Psoas muscle (tissue), 8 donors: ENCODE measurements at regions of chr17 and their contacts with region 1.

Region 1: GRCh38 chr17:81484195-81484979 is 28.2 kb downstream of the ACTG1 start:
- DNase-seq: peak; percentile 90 to 95
- ATAC-seq: peak; percentile 71 to 80 (median 74)
- H3K4me3 ChIP-seq: peak overlapping the region; percentile 64
- H3K27ac ChIP-seq: peak overlapping the region; percentile 81
- H3K4me1 ChIP-seq: peaks cover 31% of the 10 kb centered on the region
- H3K27me3 ChIP-seq: no peaks in the 10 kb centered on the region
- CTCF ChIP-seq: peak; percentile 100

Region 2: DNA sequence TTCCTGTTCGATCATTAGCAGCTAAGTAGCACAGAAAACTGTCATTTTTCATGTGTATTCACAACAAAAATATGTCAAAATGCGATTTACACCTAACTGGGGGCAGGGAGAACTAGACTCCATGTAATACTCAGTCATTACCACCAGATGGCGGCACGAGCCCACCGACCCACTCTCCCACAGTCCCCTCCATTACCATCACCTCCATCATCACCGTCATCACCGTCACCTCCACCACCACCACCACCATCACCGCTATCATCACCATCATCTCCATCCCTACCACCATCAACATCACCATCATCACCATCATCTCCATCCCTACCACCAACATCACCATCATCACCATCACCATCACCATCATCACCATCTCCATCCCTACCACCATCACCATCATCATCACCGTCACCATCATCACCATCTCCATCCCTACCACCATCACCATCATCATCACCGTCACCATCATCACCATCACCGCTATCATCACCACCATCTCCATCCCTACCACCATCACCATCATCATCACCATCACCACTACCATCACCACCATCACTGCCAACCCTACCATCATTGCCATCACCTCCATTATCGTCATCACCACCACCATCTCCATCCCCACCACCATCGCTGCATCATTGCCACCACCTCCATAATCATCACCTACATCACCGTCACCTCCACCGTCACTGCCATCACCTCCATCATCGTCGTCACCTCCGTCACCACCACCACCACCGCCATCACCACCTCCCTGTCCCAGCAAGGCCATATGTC is 230.8 kb before region 1 on chr17:
- intact Hi-C with region 1: loop called (anchors 1 to 5 kb)
- DNase-seq: peak in 1 of 2 donors; percentile 48
- ATAC-seq: peak; percentile 53 to 65 (median 54)
- H3K4me3 ChIP-seq: no peak overlapping the region
- H3K27ac ChIP-seq: no peak overlapping the region
- H3K4me1 ChIP-seq: peaks cover 18% of the 10 kb centered on the region
- H3K27me3 ChIP-seq: no peaks in the 10 kb centered on the region
- CTCF ChIP-seq: peak; percentile 83

Region 3: DNA sequence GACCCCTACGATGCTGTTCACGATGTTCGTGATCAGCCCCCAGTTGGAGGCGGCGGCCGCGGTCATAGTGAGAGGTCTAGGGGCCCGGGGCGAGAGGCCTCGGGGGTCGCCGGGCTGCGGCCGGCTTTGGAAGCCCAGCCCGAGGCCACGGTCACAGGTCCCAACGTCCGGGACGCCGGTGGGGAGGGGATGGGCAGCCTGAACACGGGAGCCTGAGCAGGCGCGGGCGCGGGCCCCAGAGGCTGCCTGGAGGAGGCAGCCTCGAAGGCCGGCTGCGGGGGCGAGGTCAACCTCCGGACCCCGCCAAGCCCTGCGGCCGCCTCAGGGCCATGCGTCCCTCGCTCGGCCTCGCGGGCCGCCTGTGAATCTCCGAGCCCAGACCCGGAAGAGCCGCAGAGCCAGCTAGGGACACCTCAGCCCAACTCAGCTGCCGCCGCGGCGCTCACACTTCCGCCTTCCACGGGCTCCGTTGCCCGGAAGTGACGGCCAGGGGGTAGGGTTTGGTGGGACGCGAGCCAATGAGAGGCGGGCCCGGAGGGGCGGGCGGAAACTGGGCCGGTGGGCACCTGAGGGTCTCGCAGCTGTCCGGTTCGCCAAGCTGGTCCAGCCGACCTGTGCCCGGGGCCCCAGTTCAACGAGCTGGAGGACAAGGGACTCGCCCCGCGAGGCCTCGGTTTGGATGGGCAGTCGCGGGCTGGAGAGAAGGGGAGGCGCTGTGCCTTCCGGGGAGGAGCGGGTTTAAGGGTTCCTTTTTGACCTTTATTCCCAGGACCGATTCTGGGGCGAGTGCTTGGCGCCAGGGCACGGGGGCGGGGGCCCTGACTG is 189.3 kb before region 1 on chr17 and contains the start of gene SLC38A10:
- intact Hi-C with region 1: loop called (anchors 1 to 5 kb)
- DNase-seq: peak; percentile 92 to 96
- ATAC-seq: peak; percentile 90 to 94 (median 92)
- H3K4me3 ChIP-seq: peak within 1 kb of the TSS; percentile 75
- H3K27ac ChIP-seq: peak within 1 kb of the TSS; percentile 96
- H3K4me1 ChIP-seq: peaks cover 37% of the 10 kb centered on the region
- H3K27me3 ChIP-seq: no peaks in the 10 kb centered on the region
- CTCF ChIP-seq: no peak
- total RNA-seq, gene SLC38A10: 16.7 to 23.9 (median 18.6) TPM

Region 4: DNA sequence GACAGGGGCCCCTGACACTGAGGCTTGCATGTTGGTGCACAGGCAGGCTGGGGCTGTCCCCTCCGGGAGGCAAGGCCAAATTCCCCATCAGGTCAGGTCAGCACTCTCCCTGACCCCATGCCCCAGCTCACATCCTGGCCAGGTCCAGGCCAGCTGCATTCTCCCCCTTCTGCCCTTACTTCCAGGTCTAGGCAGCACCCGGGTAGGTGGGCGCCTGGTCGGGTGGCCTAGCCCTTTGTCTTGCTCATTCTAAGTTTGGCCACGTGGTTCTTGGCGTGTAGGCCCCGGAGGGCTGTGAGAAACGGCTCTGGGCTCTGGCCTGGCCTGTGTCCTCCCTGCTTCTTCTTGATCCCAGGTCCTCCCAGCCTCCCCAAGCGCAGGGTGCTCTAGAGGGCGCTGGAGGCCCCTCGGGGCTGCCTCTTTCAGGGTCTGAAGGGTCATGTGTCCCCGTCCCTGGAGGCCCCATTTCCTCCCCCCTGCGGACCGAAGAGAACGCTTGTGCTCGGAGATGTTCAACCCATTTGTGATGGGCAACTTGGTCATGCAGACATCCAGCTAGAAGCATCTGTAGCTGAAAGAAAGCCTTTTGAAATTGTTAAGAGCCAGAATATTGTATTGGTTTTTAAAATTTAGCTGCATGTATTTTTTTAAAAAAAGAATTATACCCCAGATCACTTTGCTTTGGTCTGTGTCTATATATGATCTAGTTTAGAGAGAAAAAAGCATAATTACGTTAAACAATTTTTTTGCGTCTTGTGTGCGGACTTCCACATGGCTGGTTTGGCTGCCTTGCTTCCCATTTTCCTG is 82.5 kb before region 1 on chr17:
- intact Hi-C with region 1: loop called in 1 of 2 experiments (anchors 5 kb)
- DNase-seq: peak; percentile 62 to 70
- ATAC-seq: peak in 2 of 4 donors; percentile 17 to 24
- H3K4me3 ChIP-seq: peak overlapping the region; percentile 76
- H3K27ac ChIP-seq: peak overlapping the region; percentile 99
- H3K4me1 ChIP-seq: peaks cover 62% of the 10 kb centered on the region
- H3K27me3 ChIP-seq: no peaks in the 10 kb centered on the region
- CTCF ChIP-seq: peak; percentile 12

Region 5: DNA sequence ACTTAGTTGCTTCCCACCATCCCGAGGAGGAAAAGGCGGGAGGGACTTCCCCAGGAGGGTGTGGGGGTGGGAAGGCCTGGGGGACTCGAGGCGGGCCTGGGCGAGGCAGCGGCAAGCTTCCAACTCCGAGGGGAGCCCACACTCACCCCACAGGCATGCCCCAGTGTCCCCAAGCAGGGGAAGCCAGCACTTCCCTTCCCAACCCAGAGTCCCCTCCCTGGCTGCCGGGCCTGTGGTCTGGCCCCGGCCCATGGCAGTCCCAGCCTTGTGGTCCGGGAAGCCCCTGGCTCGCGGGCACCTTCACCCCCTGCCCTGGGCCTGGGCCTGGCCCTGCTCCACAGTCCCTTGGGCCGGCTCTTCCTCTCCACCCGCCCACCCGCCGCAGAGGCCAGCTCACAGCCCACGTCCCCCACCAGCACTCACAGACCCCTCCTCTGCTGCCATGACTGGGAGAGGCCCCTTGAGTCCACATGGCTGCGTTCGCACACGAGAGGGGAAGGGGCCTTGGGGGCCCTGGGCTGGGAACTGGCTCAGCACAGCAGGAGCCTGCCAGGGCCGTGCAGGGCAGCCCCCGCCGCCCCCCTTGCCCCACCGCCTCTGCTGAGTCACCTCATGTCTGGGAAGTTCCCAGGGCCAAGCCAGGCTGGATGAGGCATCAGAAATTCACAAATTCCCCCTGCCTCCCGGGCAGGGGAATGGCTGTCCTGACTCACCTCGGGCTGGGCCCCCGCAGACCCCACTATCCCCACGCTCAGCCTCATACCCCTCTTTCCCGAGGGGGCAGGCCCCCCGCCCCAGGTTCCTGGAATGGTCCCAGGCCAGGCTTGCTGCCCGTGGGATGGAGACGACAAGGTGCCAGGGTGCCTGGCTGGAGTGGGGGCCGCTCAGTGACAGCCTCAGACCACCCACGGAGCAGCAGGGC is 61.4 kb before region 1 on chr17:
- intact Hi-C with region 1: loop called in 1 of 2 experiments (anchors 5 kb)
- DNase-seq: peak; percentile 86 to 89
- ATAC-seq: peak; percentile 38 to 58 (median 44)
- H3K4me3 ChIP-seq: peak overlapping the region; percentile 37
- H3K27ac ChIP-seq: peak overlapping the region; percentile 72
- H3K4me1 ChIP-seq: peaks cover 69% of the 10 kb centered on the region
- H3K27me3 ChIP-seq: no peaks in the 10 kb centered on the region
- CTCF ChIP-seq: no peak

Region 6: GRCh38 chr17:81967533-81968395 is 483.4 kb after region 1 on chr17:
- intact Hi-C with region 1: no loop called
- DNase-seq: peak; percentile 85 to 90
- ATAC-seq: peak; percentile 77 to 91 (median 87)
- H3K4me3 ChIP-seq: peak overlapping the region; percentile 38
- H3K27ac ChIP-seq: peak overlapping the region; percentile 61
- H3K4me1 ChIP-seq: peaks cover 22% of the 10 kb centered on the region
- H3K27me3 ChIP-seq: no peaks in the 10 kb centered on the region
- CTCF ChIP-seq: no peak

Region 7: GRCh38 chr17:82909322-82909904 is 1425.0 kb after region 1 on chr17:
- intact Hi-C with region 1: no loop called
- DNase-seq: no peak
- ATAC-seq: no peak
- H3K4me3 ChIP-seq: no peak overlapping the region
- H3K27ac ChIP-seq: no peak overlapping the region
- H3K4me1 ChIP-seq: peaks cover 10% of the 10 kb centered on the region
- H3K27me3 ChIP-seq: no peaks in the 10 kb centered on the region
- CTCF ChIP-seq: no peak